Activated CD4-positive, alpha-beta memory T cell treated with anti-CD3 and anti-CD28 coated beads for 36 hours (primary cell): ENCODE measurements at regions of chr9 and their contacts with region 1.

Region 1: GRCh38 chr9:86337469-86338108 is 16.6 kb downstream of the TUT7 start:
- DNase-seq: no peak
- H3K4me3 Mint-ChIP-seq: peak overlapping the region; percentile 36
- H3K27ac Mint-ChIP-seq: no peak overlapping the region
- H3K4me1 Mint-ChIP-seq: peaks cover 49% of the 10 kb centered on the region
- H3K27me3 Mint-ChIP-seq: no peaks in the 10 kb centered on the region

Region 2: GRCh38 chr9:86303316-86303975 is 34.1 kb before region 1 on chr9:
- CTCF ChIA-PET with region 1: no interaction called
- POLR2A ChIA-PET with region 1: no interaction called
- intact Hi-C with region 1: loop called (anchors 5 kb)
- DNase-seq: peak; percentile 68
- H3K4me3 Mint-ChIP-seq: peak overlapping the region; percentile 23
- H3K27ac Mint-ChIP-seq: peak overlapping the region; percentile 90
- H3K4me1 Mint-ChIP-seq: peaks cover 38% of the 10 kb centered on the region
- H3K27me3 Mint-ChIP-seq: no peaks in the 10 kb centered on the region

Region 3: DNA sequence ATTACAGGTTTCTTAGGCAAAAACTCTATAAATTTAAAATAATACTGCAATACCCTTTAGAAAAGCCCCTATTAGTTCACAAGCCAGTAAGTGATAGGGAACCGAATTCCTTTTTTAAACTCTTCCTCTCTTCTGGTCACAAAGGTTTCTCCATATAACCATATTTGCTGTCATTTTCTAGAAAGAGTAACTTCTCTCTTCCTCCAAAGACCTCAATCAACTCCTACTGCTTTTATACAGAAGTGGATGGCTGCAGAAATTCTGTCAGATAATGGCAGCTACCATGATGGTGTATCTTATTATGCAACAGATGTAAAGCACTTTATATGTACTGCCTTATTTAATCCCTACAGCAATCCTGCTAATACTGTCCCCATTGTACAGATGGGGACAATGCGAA is 10.4 kb after region 1 on chr9:
- CTCF ChIA-PET with region 1: interaction called, 3 read pairs
- POLR2A ChIA-PET with region 1: interaction called, 14 read pairs
- intact Hi-C with region 1: loop called (anchors 1 kb)
- DNase-seq: no peak
- H3K4me3 Mint-ChIP-seq: peak overlapping the region; percentile 12
- H3K27ac Mint-ChIP-seq: peak overlapping the region; percentile 68
- H3K4me1 Mint-ChIP-seq: peaks cover 49% of the 10 kb centered on the region
- H3K27me3 Mint-ChIP-seq: no peaks in the 10 kb centered on the region